PC-9 (cell line): ENCODE measurements at regions of chr5 and their contacts with region 1.

Region 1: GRCh38 chr5:177133091-177133852 is at the start of gene NSD1:
- DNase-seq: peak in 1 of 2 experiments; percentile 75
- H3K4me3 ChIP-seq: peak within 1 kb of the TSS; percentile 78
- H3K27ac ChIP-seq: no peak within 1 kb of the TSS
- H3K4me1 ChIP-seq: peaks cover 16% of the 10 kb centered on the region
- H3K27me3 ChIP-seq: no peaks in the 10 kb centered on the region
- CTCF ChIP-seq: no peak
- total RNA-seq, gene NSD1: 60.9 and 62.2 TPM in 2 replicates

Region 2: DNA sequence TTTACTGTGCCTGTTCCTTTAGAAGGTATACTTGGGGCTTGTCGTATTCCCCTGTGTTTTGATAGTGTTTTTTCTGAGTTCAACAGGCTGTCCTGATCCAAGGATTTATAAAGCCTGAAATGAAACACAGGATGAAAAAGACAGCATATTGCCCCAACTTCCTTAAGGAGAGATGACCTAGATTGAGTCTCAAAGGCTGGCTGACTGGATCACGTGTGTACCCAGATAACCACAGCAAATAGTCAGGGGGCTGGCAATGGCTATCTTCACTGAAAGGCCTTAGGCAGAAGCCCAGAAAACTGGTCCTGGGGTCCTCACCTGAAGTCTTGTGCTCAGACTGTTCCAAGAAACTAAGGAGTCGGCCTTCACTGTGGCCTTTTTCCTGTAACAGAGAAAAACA is 226.5 kb before region 1 on chr5:
- CTCF ChIA-PET with region 1: no interaction called
- POLR2A ChIA-PET with region 1: interaction called, 11 read pairs
- intact Hi-C with region 1: no loop called
- DNase-seq: no peak
- H3K4me3 ChIP-seq: no peak overlapping the region
- H3K27ac ChIP-seq: no peak overlapping the region
- H3K4me1 ChIP-seq: no peaks in the 10 kb centered on the region
- H3K27me3 ChIP-seq: no peaks in the 10 kb centered on the region
- CTCF ChIP-seq: no peak